IMR-90 (cell line): ENCODE measurements at regions of chr12 and their contacts with region 1.

Region 1: DNA sequence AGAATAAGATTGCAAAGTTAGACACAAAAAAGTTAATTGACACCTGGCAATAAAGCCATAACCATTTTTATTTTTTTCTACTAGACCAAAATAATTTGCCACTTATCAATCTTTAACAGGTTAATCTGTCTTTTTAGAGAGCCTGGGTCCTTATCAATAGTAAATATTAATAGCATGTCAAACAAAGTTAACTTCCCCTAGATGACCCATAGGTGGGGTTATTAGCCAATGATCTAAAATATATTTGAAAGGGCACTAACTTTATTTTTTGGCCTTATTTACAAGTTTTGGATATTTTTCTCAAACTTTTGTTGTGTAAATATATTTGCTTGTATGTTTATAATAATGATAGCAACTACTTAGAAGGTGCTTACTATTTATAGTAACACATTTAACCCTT is 3.9 kb downstream of the ANKRD33 start:
- DNase-seq: peak; percentile 31
- ATAC-seq: no peak
- H3K4me3 ChIP-seq: no peak overlapping the region
- H3K27ac ChIP-seq: no peak overlapping the region
- H3K4me1 ChIP-seq: peaks cover 6% of the 10 kb centered on the region; the same call in 1 of the 2 replicates
- H3K27me3 ChIP-seq: no peaks in the 10 kb centered on the region
- CTCF ChIP-seq: peak; percentile 54
- POLR2A ChIP-seq: no peak
- RAD21 ChIP-seq: peak; percentile 49

Region 2: DNA sequence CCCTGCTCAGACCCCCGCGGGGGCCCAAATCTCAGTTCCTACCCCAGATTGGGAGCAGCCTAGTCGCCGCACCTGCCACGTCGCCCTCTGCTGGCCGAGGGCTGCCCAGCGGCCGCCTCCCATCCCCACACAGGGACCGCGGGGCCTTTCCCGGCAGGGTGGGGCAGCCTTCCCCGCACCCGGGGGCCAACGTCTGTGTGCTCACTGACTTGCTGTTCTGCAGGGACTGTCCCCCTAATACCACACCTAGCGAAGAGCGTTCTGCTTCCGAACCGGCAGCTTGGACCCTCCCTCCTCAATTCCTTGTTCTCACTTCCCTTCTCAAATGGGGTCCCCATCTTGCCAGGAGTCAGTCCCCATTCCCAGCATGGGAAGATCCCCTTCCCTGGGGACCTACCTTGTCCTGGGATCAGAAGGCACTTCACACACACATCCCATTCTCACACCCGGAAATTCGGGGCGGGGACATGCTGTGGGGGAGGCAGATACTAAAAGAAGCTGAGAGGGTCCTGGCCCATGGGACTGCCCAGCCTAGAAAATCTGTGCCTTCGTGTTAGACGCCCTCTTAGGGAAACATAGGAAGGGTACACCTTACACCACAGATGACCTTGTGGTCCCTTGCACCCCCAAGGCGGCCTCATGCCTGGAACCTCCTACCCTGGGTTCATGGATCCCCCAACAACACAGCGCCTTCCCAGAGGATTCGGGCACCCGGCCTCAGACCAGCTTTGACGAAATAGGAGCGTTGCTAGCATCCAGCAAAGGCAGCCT is 31.8 kb after region 1 on chr12:
- CTCF ChIA-PET with region 1: interaction called, 8 read pairs
- POLR2A ChIA-PET with region 1: no interaction called
- dilution Hi-C with region 1: no loop called
- in situ Hi-C with region 1: no loop called
- intact Hi-C with region 1: loop called (anchors 1 kb)
- DNase-seq: no peak
- ATAC-seq: peak; percentile 73
- H3K4me3 ChIP-seq: no peak overlapping the region
- H3K27ac ChIP-seq: no peak overlapping the region
- H3K4me1 ChIP-seq: peaks cover 10% of the 10 kb centered on the region
- H3K27me3 ChIP-seq: no peaks in the 10 kb centered on the region
- CTCF ChIP-seq: peak; percentile 71
- POLR2A ChIP-seq: no peak
- RAD21 ChIP-seq: peak; percentile 60

Region 3: DNA sequence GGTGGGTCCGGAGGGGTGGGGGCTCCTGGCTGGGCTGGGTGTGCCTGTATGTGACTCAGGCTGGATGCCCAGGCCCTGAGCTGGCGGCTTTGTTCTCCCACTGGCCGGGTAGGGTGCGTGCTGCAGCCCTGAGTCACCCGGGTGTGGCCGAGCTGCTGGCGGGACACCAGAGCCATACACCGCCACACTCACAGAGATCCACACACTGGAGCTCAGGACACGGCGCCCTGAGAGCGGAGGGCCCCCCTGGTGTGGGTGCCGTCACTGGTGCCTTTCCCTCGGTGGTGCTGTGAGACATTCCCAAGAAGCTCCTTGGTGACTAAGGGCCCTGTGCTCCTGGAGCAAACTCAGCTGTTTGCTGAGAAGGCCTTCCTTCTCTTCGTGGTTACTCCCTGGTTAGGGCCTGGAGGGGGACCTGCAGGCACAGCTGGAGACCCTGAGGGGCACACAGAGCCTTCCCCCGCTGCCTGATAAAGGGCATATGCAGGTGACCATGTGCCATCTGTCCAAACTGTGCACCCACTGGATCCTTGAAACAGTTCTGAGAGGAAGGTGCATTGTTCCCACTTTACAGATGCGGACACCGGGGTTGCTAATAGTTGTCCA is 255.6 kb after region 1 on chr12:
- CTCF ChIA-PET with region 1: no interaction called
- POLR2A ChIA-PET with region 1: no interaction called
- dilution Hi-C with region 1: no loop called
- in situ Hi-C with region 1: no loop called
- intact Hi-C with region 1: no loop called
- DNase-seq: peak; percentile 99
- ATAC-seq: peak; percentile 85
- H3K4me3 ChIP-seq: no peak overlapping the region
- H3K27ac ChIP-seq: peak overlapping the region; percentile 97
- H3K4me1 ChIP-seq: peaks cover 43% of the 10 kb centered on the region
- H3K27me3 ChIP-seq: no peaks in the 10 kb centered on the region
- CTCF ChIP-seq: no peak
- POLR2A ChIP-seq: peak; percentile 31; the same call in 1 of the 2 replicates
- RAD21 ChIP-seq: peak; percentile 15; the same call in 1 of the 2 replicates